K562 (cell line): ENCODE measurements at regions of chr16 and their contacts with region 1.

Region 1: GRCh38 chr16:47467496-47467895 is 6.4 kb downstream of the PHKB start:
- DNase-seq: peak in 1 of 4 experiments; percentile 33
- ATAC-seq: peak; percentile 5; the same call in 2 of the 3 replicates
- H3K4me3 ChIP-seq: peak overlapping the region; percentile 5; the same call in 1 of the 2 replicates
- H3K27ac ChIP-seq: peak overlapping the region; percentile 99
- H3K4me1 ChIP-seq: peaks cover 0 to 34% of the 10 kb centered on the region in 2 experiments; a peak in 4 of 5 replicates
- H3K27me3 ChIP-seq: no peaks in the 10 kb centered on the region
- CTCF ChIP-seq: no peak
- EP300 ChIP-seq: no peak
- POLR2A ChIP-seq: no peak
- RAD21 ChIP-seq: no peak

Region 2: GRCh38 chr16:47499080-47499699 is 31.7 kb after region 1 on chr16:
- CTCF ChIA-PET with region 1: no interaction called
- POLR2A ChIA-PET with region 1: no interaction called
- in situ Hi-C with region 1: no loop called
- intact Hi-C with region 1: no loop called
- DNase-seq: no peak
- ATAC-seq: no peak
- H3K4me3 ChIP-seq: no peak overlapping the region
- H3K27ac ChIP-seq: no peak overlapping the region
- H3K4me1 ChIP-seq: peaks cover 0 to 13% of the 10 kb centered on the region in 2 experiments; a peak in 3 of 5 replicates
- H3K27me3 ChIP-seq: no peaks in the 10 kb centered on the region
- CTCF ChIP-seq: no peak
- EP300 ChIP-seq: no peak
- POLR2A ChIP-seq: no peak
- RAD21 ChIP-seq: no peak

Region 3: GRCh38 chr16:47519037-47519436 is 51.5 kb after region 1 on chr16:
- CTCF ChIA-PET with region 1: no interaction called
- POLR2A ChIA-PET with region 1: interaction called, 3 read pairs
- in situ Hi-C with region 1: no loop called
- intact Hi-C with region 1: loop called (anchors 5 kb)
- DNase-seq: no peak
- ATAC-seq: no peak
- H3K4me3 ChIP-seq: no peak overlapping the region
- H3K27ac ChIP-seq: peak overlapping the region; percentile 50; the same call in 1 of the 3 replicates
- H3K4me1 ChIP-seq: peaks cover 0 to 17% of the 10 kb centered on the region in 2 experiments; a peak in 3 of 5 replicates
- H3K27me3 ChIP-seq: no peaks in the 10 kb centered on the region
- CTCF ChIP-seq: no peak
- EP300 ChIP-seq: no peak
- POLR2A ChIP-seq: no peak
- RAD21 ChIP-seq: no peak

Region 4: DNA sequence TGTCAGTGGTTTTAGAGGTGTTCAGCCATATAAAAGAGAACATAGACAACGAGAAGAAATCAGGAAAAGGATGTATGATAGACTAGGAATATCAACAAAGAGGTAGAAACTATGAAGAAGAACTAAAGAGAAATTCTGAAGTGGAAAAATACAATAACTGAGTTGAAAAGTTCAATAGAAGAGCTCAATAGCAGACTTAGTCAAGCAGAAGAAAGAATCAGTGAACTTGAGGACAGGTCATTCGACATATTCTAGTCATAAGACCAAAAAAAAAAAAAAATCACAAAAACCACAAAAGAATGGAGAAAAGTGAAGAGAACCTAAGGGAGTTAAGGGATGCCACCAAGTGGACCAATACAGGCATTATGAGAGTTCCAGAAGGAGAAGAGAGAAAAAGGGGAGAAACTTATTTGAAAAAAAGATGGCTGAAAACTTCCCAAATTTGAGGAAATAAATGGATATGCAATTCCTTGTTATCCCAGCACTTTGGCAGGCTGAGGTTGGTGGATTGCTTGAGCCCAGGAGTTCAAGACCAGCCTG is 367.1 kb after region 1 on chr16:
- CTCF ChIA-PET with region 1: no interaction called
- POLR2A ChIA-PET with region 1: no interaction called
- in situ Hi-C with region 1: no loop called
- intact Hi-C with region 1: no loop called
- DNase-seq: no peak
- ATAC-seq: no peak
- H3K4me3 ChIP-seq: no peak overlapping the region
- H3K27ac ChIP-seq: no peak overlapping the region
- H3K4me1 ChIP-seq: no peaks in the 10 kb centered on the region
- H3K27me3 ChIP-seq: no peaks in the 10 kb centered on the region
- CTCF ChIP-seq: no peak
- EP300 ChIP-seq: no peak
- POLR2A ChIP-seq: no peak
- RAD21 ChIP-seq: no peak